Activated naive CD4-positive, alpha-beta T cell treated with anti-CD3 and anti-CD28 coated beads for 36 hours (primary cell): ENCODE measurements at regions of chr22 and their contacts with region 1.

Region 1: DNA sequence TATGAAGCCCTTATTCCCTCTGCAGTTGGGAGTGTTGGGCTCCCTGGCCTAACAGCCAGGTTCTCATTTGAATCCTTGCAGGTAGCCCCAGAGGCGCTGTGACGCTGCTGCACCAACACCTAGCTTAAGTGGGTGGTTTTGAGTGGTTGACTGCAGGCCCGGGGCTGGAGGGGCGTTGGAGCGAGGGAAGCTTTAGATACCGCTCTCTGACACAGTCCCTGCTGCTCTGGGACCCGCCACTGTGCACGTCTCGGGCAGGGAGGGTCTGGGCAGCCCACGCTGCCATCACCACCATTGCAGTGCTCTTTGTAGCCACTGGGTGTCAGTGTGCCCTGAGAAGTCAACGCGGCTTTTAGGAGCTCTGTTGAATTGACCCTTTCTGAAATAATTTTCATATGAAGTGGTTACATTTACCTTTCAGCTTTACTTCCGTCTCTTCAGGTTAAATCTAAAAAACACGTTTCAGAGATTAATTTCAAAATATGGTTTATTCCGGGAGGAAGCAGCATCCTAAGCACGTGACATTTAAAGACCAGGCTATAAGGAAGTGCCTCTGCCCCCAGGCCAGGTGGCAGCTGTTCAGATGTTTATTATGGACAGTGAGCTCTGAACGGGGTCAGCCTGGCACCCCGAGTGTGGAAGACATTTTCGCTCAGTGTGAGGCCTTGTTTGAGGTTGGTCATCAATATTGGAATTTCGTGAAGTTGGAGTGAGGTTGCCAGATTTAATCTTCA is 30.9 kb upstream of the PARVB start:
- DNase-seq: peak; percentile 68
- H3K4me3 Mint-ChIP-seq: no peak overlapping the region
- H3K27ac Mint-ChIP-seq: no peak overlapping the region
- H3K4me1 Mint-ChIP-seq: peaks cover 17% of the 10 kb centered on the region
- H3K27me3 Mint-ChIP-seq: no peaks in the 10 kb centered on the region

Region 2: DNA sequence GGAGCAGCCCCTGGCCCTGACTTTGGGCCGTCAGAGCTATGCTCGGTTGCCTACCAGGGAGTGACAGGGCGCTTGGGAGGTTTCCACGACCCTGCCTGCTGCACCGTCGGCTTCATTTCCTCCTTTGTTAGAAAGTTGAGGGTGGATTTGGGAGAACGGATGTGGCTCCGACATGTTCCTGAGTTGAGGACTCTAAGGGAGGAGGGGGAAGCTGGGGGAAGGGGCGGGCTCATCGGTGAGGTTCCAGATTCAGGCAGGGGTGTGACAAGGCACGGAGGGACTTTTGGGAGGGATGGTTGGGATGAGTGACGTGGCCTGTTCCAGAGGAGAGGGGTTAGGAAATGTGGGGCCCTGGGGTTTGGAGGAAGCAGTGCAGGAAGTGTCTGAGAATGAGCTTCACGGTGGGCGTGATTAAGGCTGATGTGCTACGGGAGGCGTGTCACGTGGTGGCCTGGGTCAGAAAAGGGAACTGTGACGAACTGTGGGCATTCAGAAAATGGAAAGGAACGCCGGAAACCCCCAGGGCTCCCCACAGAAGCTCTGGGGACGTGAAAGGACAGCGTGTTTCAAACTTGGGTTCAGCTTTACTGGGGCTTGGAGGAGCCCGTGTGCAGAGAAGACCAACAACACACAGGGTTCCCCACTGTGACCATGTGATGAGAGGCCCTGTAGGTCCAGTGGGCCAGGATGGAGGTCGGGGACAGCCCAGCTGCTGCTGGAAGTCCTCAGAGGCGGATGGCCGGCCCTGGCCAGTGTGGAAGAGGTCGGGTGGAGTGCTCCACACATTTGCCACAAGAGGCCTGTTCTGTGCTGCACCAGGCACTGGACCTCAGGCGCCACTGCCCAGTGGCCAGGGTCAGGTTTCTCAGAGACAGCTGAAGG is 33.7 kb after region 1 on chr22:
- CTCF ChIA-PET with region 1: interaction called, 12 read pairs
- intact Hi-C with region 1: no loop called
- DNase-seq: peak; percentile 82
- H3K4me3 Mint-ChIP-seq: peak overlapping the region; percentile 67
- H3K27ac Mint-ChIP-seq: peak overlapping the region; percentile 86
- H3K4me1 Mint-ChIP-seq: peaks cover 39% of the 10 kb centered on the region
- H3K27me3 Mint-ChIP-seq: peaks cover 22% of the 10 kb centered on the region

Region 3: DNA sequence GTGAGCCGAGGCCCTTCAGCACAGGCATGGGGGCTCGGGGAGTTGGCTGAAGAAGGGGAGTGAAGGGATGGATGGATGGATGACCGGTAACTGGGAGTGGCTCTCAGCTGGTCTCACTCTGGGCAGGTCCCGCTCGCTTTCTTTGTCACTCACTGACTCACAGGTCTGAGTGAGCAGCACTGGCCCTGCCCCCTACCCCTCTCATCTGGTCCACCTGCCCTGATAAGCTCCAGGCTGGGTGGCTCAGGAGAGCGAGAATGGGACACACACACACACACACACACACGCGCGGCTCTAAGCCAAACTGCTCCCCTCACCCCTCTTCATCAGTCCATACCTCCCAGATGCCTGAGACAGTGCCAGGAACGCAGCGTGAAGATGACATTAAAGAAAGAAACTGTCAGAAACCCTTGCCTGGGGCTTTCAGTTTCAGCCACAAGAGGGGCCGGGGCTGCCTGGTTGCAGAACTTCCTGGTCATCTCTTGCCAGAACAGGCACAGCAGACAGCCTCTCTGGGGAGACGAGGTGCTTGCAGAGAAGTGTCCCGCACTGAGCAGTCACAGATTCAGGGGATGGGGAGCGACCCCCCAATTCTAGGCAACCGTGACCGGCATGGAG is 336.1 kb after region 1 on chr22:
- CTCF ChIA-PET with region 1: no interaction called
- intact Hi-C with region 1: loop called (anchors 5 kb)
- DNase-seq: no peak
- H3K4me3 Mint-ChIP-seq: no peak overlapping the region
- H3K27ac Mint-ChIP-seq: no peak overlapping the region
- H3K4me1 Mint-ChIP-seq: peaks cover 14% of the 10 kb centered on the region
- H3K27me3 Mint-ChIP-seq: peaks cover 57% of the 10 kb centered on the region

Region 4: DNA sequence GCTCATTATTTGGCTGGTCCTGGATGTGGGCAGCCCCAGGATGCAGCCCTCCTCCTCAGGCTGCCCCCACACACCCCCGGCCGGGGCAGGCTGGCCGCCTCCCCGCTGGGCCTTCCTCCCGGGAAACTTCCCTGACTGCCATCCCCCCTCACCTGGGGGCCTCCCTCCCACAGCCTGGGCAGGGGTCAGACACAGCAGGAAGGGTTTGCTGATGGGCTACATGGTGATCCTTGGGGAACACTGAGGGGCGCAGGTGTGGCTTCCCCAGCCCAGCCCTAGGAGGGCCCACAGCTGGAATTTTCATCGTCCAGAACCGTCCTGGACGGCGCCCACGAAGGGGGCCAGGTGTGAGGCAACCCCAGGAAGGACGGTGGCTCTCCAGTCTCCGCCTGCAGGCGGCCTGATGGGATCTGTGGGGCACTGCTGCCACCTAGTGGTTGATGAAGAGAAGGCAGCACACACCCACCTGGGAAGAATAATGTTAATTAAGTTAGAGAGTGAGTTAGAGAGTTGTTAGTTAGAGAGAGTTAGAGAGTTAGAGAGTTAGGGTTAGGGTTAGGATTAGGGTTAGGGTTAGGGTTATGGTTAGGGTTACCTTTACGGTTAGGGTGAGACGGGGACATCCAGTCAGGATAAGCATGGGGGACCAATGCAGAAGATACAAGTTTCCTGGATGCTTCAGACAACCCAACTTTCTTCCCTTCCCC is 632.9 kb after region 1 on chr22:
- CTCF ChIA-PET with region 1: interaction called, 46 read pairs
- intact Hi-C with region 1: loop called (anchors 1 kb)
- DNase-seq: peak; percentile 84
- H3K4me3 Mint-ChIP-seq: no peak overlapping the region
- H3K27ac Mint-ChIP-seq: no peak overlapping the region
- H3K4me1 Mint-ChIP-seq: peaks cover 4% of the 10 kb centered on the region
- H3K27me3 Mint-ChIP-seq: no peaks in the 10 kb centered on the region